ENCODE measurements at regions of chr6 and their contacts with region 1.

Region 1: DNA sequence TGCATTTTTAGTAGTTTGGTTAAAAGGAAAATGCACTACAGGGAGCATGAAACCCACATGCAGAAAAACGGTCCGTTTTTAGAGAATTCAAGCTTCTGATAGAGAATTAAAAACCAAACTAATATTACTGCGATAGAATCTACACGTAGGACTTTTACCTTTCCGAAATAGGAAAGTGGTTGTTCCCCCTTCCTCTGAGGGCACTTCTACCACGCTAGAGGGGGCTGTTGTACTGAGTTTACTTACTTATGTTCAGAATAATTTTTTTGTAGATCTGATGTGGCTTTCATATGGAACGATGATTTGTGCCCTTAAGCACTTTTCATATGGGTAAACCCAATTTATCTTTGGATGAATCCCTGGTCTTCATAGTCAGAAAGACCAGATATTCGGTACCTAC is 264.3 kb upstream of the PLN start:
- DNase-seq: peak; percentile 55
- ATAC-seq: peak; percentile 79
- H3K4me3 ChIP-seq: no peak overlapping the region
- H3K27ac ChIP-seq: no peak overlapping the region
- H3K4me1 ChIP-seq: no peaks in the 10 kb centered on the region
- H3K27me3 ChIP-seq: no peaks in the 10 kb centered on the region
- CTCF ChIP-seq: peak; percentile 68 to 78 (median 78)
- POLR2A ChIP-seq: no peak
- RAD21 ChIP-seq: peak; percentile 84

Region 2: DNA sequence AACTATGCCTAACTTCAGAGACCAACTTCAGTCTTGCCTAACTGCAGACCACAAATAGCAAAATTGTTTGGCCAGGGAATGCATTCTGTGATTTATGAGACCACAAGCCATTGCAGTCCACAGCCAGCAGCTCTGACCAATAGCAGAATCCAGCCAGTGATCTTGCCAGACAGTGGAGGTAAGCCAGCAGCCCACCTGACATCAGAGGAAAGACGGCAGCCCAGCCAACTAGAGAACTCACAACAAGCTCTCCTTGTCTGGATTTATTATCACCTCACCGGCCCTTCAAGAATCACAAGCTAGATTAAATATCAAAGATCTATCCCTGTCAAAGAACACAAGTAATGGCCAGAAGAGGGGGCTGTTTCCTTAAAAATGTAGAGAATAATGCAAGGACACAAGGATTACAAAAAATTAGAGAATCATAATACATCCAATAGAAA is 443.2 kb before region 1 on chr6:
- CTCF ChIA-PET with region 1: interaction called, 3 read pairs
- POLR2A ChIA-PET with region 1: no interaction called
- RAD21 ChIA-PET with region 1: no interaction called
- intact Hi-C with region 1: loop called (anchors 5 kb)
- DNase-seq: peak; percentile 68
- ATAC-seq: peak; percentile 82
- H3K4me3 ChIP-seq: no peak overlapping the region
- H3K27ac ChIP-seq: no peak overlapping the region
- H3K4me1 ChIP-seq: no peaks in the 10 kb centered on the region
- H3K27me3 ChIP-seq: no peaks in the 10 kb centered on the region
- CTCF ChIP-seq: peak; percentile 41 to 75 (median 73); a peak in 5 of 6 replicates
- POLR2A ChIP-seq: no peak
- RAD21 ChIP-seq: peak; percentile 83

Region 3: DNA sequence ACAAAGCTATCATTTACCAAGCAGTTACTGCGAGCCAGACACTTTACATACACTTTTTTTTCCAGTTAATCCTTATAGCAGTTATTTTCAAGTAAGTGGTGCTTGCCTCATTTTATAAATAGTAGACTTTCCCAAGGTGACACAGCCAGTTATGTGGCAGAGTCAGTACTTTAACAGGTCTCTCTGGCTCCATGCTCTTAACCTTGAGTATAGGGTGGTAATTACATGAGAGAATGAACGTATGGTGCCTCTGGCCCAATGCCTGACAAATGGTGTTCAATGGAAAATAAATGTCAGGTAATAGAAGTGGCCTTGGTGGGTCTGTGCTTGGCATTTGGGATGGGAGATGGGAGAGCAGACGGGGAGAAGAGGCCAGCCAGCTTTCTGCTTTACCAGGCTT is 60.5 kb before region 1 on chr6:
- CTCF ChIA-PET with region 1: no interaction called
- POLR2A ChIA-PET with region 1: no interaction called
- RAD21 ChIA-PET with region 1: no interaction called
- intact Hi-C with region 1: no loop called
- DNase-seq: no peak
- ATAC-seq: no peak
- H3K4me3 ChIP-seq: no peak overlapping the region
- H3K27ac ChIP-seq: no peak overlapping the region
- H3K4me1 ChIP-seq: no peaks in the 10 kb centered on the region
- H3K27me3 ChIP-seq: 0 out of 2 replicates have a peak, but pooled peaks cover 3% of the 10 kb centered on the region
- CTCF ChIP-seq: no peak
- POLR2A ChIP-seq: no peak
- RAD21 ChIP-seq: no peak

Region 4: GRCh38 chr6:118551063-118552053 is 267.6 kb after region 1 on chr6:
- CTCF ChIA-PET with region 1: interaction called, 3 read pairs
- POLR2A ChIA-PET with region 1: no interaction called
- RAD21 ChIA-PET with region 1: no interaction called
- intact Hi-C with region 1: loop called (anchors 1 kb)
- DNase-seq: peak; percentile 37
- ATAC-seq: peak; percentile 84
- H3K4me3 ChIP-seq: no peak overlapping the region
- H3K27ac ChIP-seq: no peak overlapping the region
- H3K4me1 ChIP-seq: no peaks in the 10 kb centered on the region
- H3K27me3 ChIP-seq: no peaks in the 10 kb centered on the region
- CTCF ChIP-seq: peak; percentile 44 to 64 (median 60); a peak in 4 of 6 replicates
- POLR2A ChIP-seq: no peak
- RAD21 ChIP-seq: peak; percentile 76

Region 5: DNA sequence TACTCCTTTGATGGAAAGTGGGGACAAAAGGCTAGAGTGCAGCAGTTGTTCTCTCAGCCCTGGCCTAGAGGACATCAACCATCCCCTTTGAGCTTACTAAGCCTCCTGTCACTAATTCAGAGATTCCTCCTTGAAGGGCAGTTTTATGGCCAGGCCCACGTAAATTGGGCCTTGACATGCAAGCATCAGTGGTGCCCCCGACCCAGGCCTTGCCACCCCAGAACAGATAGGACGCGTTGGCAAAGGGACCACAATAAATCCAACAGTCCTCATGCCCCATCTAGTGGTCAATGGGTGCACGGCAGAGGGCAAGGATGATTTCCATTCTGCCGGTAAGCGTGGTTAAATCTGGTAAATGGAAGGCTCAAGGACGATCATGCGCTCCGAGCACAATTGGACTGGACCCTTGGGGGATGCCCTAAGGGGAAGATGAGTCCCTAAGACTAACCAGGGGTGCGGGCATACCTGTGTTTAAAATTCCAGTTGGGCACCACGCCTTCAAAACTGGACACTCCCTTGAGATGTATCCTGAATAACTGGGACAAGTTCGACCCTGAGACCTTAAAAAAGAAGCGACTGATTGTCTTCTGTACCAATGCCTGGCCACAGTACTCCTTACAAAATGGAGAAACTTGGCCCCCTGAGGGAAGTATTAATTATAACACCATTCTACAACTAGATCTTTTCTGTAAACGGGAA is 335.1 kb after region 1 on chr6:
- CTCF ChIA-PET with region 1: no interaction called
- POLR2A ChIA-PET with region 1: no interaction called
- RAD21 ChIA-PET with region 1: no interaction called
- intact Hi-C with region 1: loop called (anchors 1 kb)
- DNase-seq: peak; percentile 12
- ATAC-seq: peak; percentile 96
- H3K4me3 ChIP-seq: no peak overlapping the region
- H3K27ac ChIP-seq: no peak overlapping the region
- H3K4me1 ChIP-seq: no peaks in the 10 kb centered on the region
- H3K27me3 ChIP-seq: no peaks in the 10 kb centered on the region
- CTCF ChIP-seq: peak; percentile 52 to 90 (median 87); a peak in 5 of 6 replicates
- POLR2A ChIP-seq: no peak
- RAD21 ChIP-seq: peak; percentile 75

Region 6: GRCh38 chr6:118800394-118801071 is 516.8 kb after region 1 on chr6:
- CTCF ChIA-PET with region 1: no interaction called
- POLR2A ChIA-PET with region 1: no interaction called
- RAD21 ChIA-PET with region 1: interaction called in 1 of 2 experiments, 3 read pairs
- intact Hi-C with region 1: loop called (anchors 10 kb)
- DNase-seq: peak; percentile 57
- ATAC-seq: peak; percentile 89
- H3K4me3 ChIP-seq: no peak overlapping the region
- H3K27ac ChIP-seq: no peak overlapping the region
- H3K4me1 ChIP-seq: peaks cover 0 to 10% of the 10 kb centered on the region in 2 experiments; a peak in 3 of 4 replicates
- H3K27me3 ChIP-seq: no peaks in the 10 kb centered on the region
- CTCF ChIP-seq: peak; percentile 54 to 95 (median 92); a peak in 5 of 6 replicates
- POLR2A ChIP-seq: no peak
- RAD21 ChIP-seq: peak; percentile 72